GM12878 (cell line): ENCODE measurements at regions of chr7 and their contacts with region 1.

Region 1: GRCh38 chr7:55469271-55469681 is 103.0 kb downstream of the VOPP1 start:
- DNase-seq: no peak
- ATAC-seq: no peak
- H3K4me3 ChIP-seq: no peak overlapping the region
- H3K27ac ChIP-seq: no peak overlapping the region
- H3K4me1 ChIP-seq: no peaks in the 10 kb centered on the region
- H3K27me3 ChIP-seq: no peaks in the 10 kb centered on the region
- CTCF ChIP-seq: no peak
- EP300 ChIP-seq: no peak
- POLR2A ChIP-seq: no peak
- RAD21 ChIP-seq: no peak

Region 2: DNA sequence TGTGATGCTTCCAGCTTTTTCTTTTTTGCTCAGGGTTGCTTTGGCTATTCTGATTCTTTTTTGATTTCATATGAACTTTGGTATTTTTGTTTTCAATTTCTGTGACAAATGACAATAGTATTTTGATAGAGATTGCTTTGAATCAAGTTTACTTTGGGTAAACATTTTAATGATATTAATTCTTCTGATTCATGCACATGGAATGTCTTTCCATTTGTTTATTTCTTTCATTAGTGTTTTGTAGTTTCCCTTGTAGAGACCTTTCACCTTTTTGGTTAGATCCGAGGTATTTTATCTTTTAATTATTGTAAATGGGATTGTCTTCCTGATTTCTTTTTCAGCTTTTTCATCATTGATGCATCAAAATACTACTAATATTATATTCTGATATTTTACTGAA is 10.9 kb before region 1 on chr7:
- CTCF ChIA-PET with region 1: interaction called, 5 read pairs
- POLR2A ChIA-PET with region 1: no interaction called
- RAD21 ChIA-PET with region 1: no interaction called
- SMC1A ChIA-PET with region 1: interaction called, 11 read pairs
- in situ Hi-C with region 1: no loop called
- intact Hi-C with region 1: no loop called
- DNase-seq: no peak
- ATAC-seq: no peak
- H3K4me3 ChIP-seq: no peak overlapping the region
- H3K27ac ChIP-seq: no peak overlapping the region
- H3K4me1 ChIP-seq: no peaks in the 10 kb centered on the region
- H3K27me3 ChIP-seq: no peaks in the 10 kb centered on the region
- CTCF ChIP-seq: no peak
- EP300 ChIP-seq: no peak
- POLR2A ChIP-seq: no peak
- RAD21 ChIP-seq: no peak